ENCODE measurements at regions of chr7 and their contacts with region 1.

Region 1: GRCh38 chr7:40763318-40764287 is 628.8 kb downstream of the SUGCT start:
- DNase-seq: peak; percentile 86
- ATAC-seq: peak; percentile 87
- H3K4me3 ChIP-seq: peak overlapping the region; percentile 34; the same call in 1 of the 2 replicates
- H3K27ac ChIP-seq: peak overlapping the region; percentile 91
- H3K4me1 ChIP-seq: peaks cover 6% of the 10 kb centered on the region
- H3K27me3 ChIP-seq: no peaks in the 10 kb centered on the region
- CTCF ChIP-seq: peak; percentile 60
- POLR2A ChIP-seq: no peak
- RAD21 ChIP-seq: peak; percentile 78

Region 2: GRCh38 chr7:40232242-40232893 is 531.2 kb before region 1 on chr7:
- CTCF ChIA-PET with region 1: interaction called, 3 read pairs
- POLR2A ChIA-PET with region 1: no interaction called
- dilution Hi-C with region 1: no loop called
- in situ Hi-C with region 1: loop called (anchors 10 kb)
- intact Hi-C with region 1: loop called (anchors 2 kb)
- DNase-seq: peak; percentile 80
- ATAC-seq: peak; percentile 89
- H3K4me3 ChIP-seq: no peak overlapping the region
- H3K27ac ChIP-seq: no peak overlapping the region
- H3K4me1 ChIP-seq: peaks cover 4% of the 10 kb centered on the region; the same call in 1 of the 2 replicates
- H3K27me3 ChIP-seq: no peaks in the 10 kb centered on the region
- CTCF ChIP-seq: peak; percentile 81
- POLR2A ChIP-seq: no peak
- RAD21 ChIP-seq: peak; percentile 84

Region 3: DNA sequence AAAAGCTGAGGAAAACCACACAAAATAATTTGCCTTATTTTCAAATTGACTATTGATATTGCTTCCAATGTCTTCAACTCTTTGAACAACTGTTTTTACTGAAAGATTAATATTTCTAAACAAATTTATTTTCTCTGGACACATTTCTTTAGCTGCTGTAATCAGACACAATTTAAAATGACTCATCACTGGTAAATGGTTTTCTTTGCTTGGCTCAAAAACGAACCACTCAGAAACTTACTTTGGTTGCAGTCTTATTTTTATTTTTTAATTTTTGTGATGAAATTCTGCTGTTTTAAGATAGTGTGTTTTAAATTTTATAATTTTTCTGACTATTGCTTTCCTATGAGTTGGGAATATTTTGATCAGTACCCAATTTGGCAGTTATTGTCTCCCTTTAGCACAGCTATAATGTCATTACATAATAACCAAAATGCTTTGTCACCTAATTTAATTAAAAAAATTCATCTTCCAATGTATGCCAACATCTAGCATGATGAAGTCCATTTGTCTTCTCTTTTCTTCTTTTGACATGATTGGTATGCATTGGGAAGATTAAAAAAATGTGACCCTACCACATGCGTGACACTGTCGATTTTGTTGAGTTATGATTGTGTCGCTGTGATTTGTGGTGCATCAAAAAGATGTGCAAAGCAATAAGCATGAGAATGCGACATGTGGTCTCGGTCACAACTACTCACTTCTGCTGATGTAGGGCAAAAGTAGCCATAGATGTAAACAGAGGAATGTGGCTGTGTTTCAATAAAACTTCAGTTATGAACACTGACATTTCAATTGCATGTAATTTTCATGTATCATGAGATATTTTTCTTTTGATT is 406.5 kb before region 1 on chr7:
- CTCF ChIA-PET with region 1: no interaction called
- POLR2A ChIA-PET with region 1: no interaction called
- dilution Hi-C with region 1: no loop called
- in situ Hi-C with region 1: no loop called
- intact Hi-C with region 1: no loop called
- DNase-seq: peak; percentile 47
- ATAC-seq: peak; percentile 37
- H3K4me3 ChIP-seq: no peak overlapping the region
- H3K27ac ChIP-seq: no peak overlapping the region
- H3K4me1 ChIP-seq: peaks cover 2% of the 10 kb centered on the region; the same call in 1 of the 2 replicates
- H3K27me3 ChIP-seq: no peaks in the 10 kb centered on the region
- CTCF ChIP-seq: no peak
- POLR2A ChIP-seq: no peak
- RAD21 ChIP-seq: no peak

Region 4: GRCh38 chr7:40604601-40605438 is 158.8 kb before region 1 on chr7:
- CTCF ChIA-PET with region 1: interaction called, 4 read pairs
- POLR2A ChIA-PET with region 1: no interaction called
- dilution Hi-C with region 1: no loop called
- in situ Hi-C with region 1: no loop called
- intact Hi-C with region 1: loop called (anchors 1 kb)
- DNase-seq: peak; percentile 52
- ATAC-seq: peak; percentile 96
- H3K4me3 ChIP-seq: no peak overlapping the region
- H3K27ac ChIP-seq: no peak overlapping the region
- H3K4me1 ChIP-seq: peaks cover 2% of the 10 kb centered on the region; the same call in 1 of the 2 replicates
- H3K27me3 ChIP-seq: no peaks in the 10 kb centered on the region
- CTCF ChIP-seq: peak; percentile 78
- POLR2A ChIP-seq: no peak
- RAD21 ChIP-seq: peak; percentile 83

Region 5: GRCh38 chr7:40742270-40742669 is 21.3 kb before region 1 on chr7:
- CTCF ChIA-PET with region 1: no interaction called
- POLR2A ChIA-PET with region 1: no interaction called
- dilution Hi-C with region 1: no loop called
- in situ Hi-C with region 1: no loop called
- intact Hi-C with region 1: no loop called
- DNase-seq: no peak
- ATAC-seq: no peak
- H3K4me3 ChIP-seq: no peak overlapping the region
- H3K27ac ChIP-seq: no peak overlapping the region
- H3K4me1 ChIP-seq: peaks cover 2% of the 10 kb centered on the region
- H3K27me3 ChIP-seq: no peaks in the 10 kb centered on the region
- CTCF ChIP-seq: no peak
- POLR2A ChIP-seq: no peak
- RAD21 ChIP-seq: no peak

Region 6: DNA sequence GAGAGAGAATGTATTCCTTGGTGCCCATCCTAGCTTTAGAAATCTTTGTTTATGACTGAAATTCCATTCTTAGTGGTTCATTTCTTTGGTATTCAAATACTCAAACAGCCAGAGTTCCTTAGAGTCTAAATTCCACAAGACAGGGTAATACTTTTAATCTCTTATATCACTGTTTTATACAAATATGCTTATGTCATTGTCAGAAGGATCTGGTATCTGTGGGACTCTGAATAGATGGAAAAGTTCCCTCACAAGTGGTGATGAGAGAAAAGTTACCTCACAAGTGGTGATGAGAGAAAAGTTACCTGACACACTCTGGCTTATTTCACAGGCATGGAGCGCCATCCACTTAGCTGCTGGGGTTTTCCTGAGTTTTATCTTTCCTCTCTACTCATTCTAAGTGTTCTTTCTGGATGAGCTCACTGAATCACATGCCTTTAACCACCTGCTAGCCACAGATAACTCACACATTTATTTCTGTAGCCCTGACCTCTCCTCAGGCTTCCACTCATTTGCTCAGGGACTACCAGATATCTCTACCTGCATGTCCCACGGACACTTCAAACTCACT is 155.2 kb after region 1 on chr7:
- CTCF ChIA-PET with region 1: interaction called, 7 read pairs
- POLR2A ChIA-PET with region 1: no interaction called
- dilution Hi-C with region 1: no loop called
- in situ Hi-C with region 1: no loop called
- intact Hi-C with region 1: loop called (anchors 2 kb)
- DNase-seq: peak; percentile 93
- ATAC-seq: peak; percentile 88
- H3K4me3 ChIP-seq: no peak overlapping the region
- H3K27ac ChIP-seq: peak overlapping the region; percentile 79
- H3K4me1 ChIP-seq: peaks cover 17% of the 10 kb centered on the region
- H3K27me3 ChIP-seq: no peaks in the 10 kb centered on the region
- CTCF ChIP-seq: no peak
- POLR2A ChIP-seq: no peak
- RAD21 ChIP-seq: no peak

Measured in IMR-90 (cell line).